ENCODE measurements at regions of chr3 and their contacts with region 1.

Region 1: GRCh38 chr3:194472290-194472920 is 14.4 kb downstream of the ATP13A3 start:
- DNase-seq: peak in 1 of 2 donors; percentile 76
- ATAC-seq: peak; percentile 84 to 96 (median 93)
- H3K4me3 ChIP-seq: no peak overlapping the region
- H3K4me3 Mint-ChIP-seq: no peak overlapping the region
- H3K27ac ChIP-seq: no peak overlapping the region
- H3K27ac Mint-ChIP-seq: no peak overlapping the region
- H3K4me1 ChIP-seq: no peaks in the 10 kb centered on the region
- H3K4me1 Mint-ChIP-seq: peaks cover 6 to 11% of the 10 kb centered on the region in 2 donors
- H3K27me3 ChIP-seq: no peaks in the 10 kb centered on the region
- H3K27me3 Mint-ChIP-seq: no peaks in the 10 kb centered on the region
- CTCF ChIP-seq: peak; percentile 95

Region 2: GRCh38 chr3:194070634-194071409 is 401.6 kb before region 1 on chr3:
- intact Hi-C with region 1: no loop called
- DNase-seq: peak; percentile 66 to 74
- ATAC-seq: peak; percentile 84 to 89 (median 86)
- H3K4me3 ChIP-seq: peak overlapping the region; percentile 25
- H3K4me3 Mint-ChIP-seq: peak overlapping the region; percentile 83
- H3K27ac ChIP-seq: no peak overlapping the region
- H3K27ac Mint-ChIP-seq: peak overlapping the region in 1 of 2 donors; percentile 71
- H3K4me1 ChIP-seq: peaks cover 14% of the 10 kb centered on the region
- H3K4me1 Mint-ChIP-seq: peaks cover 6 to 13% of the 10 kb centered on the region in 2 donors
- H3K27me3 ChIP-seq: peaks cover 14% of the 10 kb centered on the region
- H3K27me3 Mint-ChIP-seq: peaks cover 36 to 53% of the 10 kb centered on the region in 2 donors
- CTCF ChIP-seq: no peak

Region 3: GRCh38 chr3:194486540-194487288 is 14.3 kb after region 1 on chr3 and contains the start of gene ATP13A3:
- intact Hi-C with region 1: loop called (anchors 1 kb)
- DNase-seq: peak; percentile 87 to 96
- ATAC-seq: peak; percentile 77 to 94 (median 82)
- H3K4me3 ChIP-seq: peak within 1 kb of the TSS; percentile 64
- H3K4me3 Mint-ChIP-seq: peak within 1 kb of the TSS; percentile 95
- H3K27ac ChIP-seq: peak within 1 kb of the TSS; percentile 87
- H3K27ac Mint-ChIP-seq: peak within 1 kb of the TSS; percentile 89 to 90
- H3K4me1 ChIP-seq: peaks cover 31% of the 10 kb centered on the region
- H3K4me1 Mint-ChIP-seq: peaks cover 34 to 40% of the 10 kb centered on the region in 2 donors
- H3K27me3 ChIP-seq: no peaks in the 10 kb centered on the region
- H3K27me3 Mint-ChIP-seq: no peaks in the 10 kb centered on the region
- CTCF ChIP-seq: no peak
- total RNA-seq, gene ATP13A3: 62.9 to 79.2 (median 64.2) TPM

Region 4: DNA sequence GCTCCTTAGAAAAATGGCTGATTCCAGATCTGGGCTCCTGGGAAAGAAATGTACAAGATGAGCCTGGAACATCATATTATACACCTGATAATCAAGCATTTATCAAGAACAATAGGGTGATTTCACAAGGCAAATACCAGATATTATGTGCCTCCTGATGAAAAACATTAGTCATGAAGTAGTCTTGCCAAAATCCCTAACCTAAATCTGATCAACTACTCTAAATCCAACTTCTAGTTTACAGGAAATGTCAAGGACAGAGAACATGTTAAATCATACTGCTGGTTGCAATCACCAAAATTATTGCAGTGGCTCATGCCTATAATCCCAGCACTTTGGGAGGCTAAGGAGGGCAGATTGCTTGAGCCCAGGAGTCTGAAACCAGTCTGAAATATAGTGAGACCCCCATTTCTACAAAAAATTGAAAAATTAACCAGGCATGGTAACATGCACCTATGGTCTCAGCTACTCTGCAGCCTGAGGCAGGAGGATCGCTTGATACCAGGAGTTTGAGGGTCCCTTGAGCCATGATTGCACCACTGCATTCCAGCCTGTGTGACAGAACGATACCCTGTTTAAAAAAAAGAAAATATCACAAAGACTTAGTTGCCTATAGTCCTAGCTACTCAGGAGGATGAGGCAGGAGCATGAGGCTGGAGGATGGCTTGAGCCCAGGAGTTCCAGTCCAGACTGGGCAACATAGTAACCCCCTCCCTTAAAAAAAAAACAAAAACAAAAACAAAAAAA is 49.3 kb after region 1 on chr3:
- intact Hi-C with region 1: loop called (anchors 1 kb)
- DNase-seq: no peak
- ATAC-seq: no peak
- H3K4me3 ChIP-seq: no peak overlapping the region
- H3K4me3 Mint-ChIP-seq: no peak overlapping the region
- H3K27ac ChIP-seq: no peak overlapping the region
- H3K27ac Mint-ChIP-seq: no peak overlapping the region
- H3K4me1 ChIP-seq: no peaks in the 10 kb centered on the region
- H3K4me1 Mint-ChIP-seq: no peaks in the 10 kb centered on the region
- H3K27me3 ChIP-seq: no peaks in the 10 kb centered on the region
- H3K27me3 Mint-ChIP-seq: peaks cover 0 to 4% of the 10 kb centered on the region in 2 donors
- CTCF ChIP-seq: no peak

Region 5: GRCh38 chr3:194573691-194574437 is 101.5 kb after region 1 on chr3:
- intact Hi-C with region 1: loop called (anchors 1 kb)
- DNase-seq: peak in 1 of 2 donors; percentile 63
- ATAC-seq: peak; percentile 69 to 93 (median 87)
- H3K4me3 ChIP-seq: no peak overlapping the region
- H3K4me3 Mint-ChIP-seq: no peak overlapping the region
- H3K27ac ChIP-seq: no peak overlapping the region
- H3K27ac Mint-ChIP-seq: no peak overlapping the region
- H3K4me1 ChIP-seq: no peaks in the 10 kb centered on the region
- H3K4me1 Mint-ChIP-seq: no peaks in the 10 kb centered on the region
- H3K27me3 ChIP-seq: no peaks in the 10 kb centered on the region
- H3K27me3 Mint-ChIP-seq: peaks cover 31 to 44% of the 10 kb centered on the region in 2 donors
- CTCF ChIP-seq: peak; percentile 32

Region 6: DNA sequence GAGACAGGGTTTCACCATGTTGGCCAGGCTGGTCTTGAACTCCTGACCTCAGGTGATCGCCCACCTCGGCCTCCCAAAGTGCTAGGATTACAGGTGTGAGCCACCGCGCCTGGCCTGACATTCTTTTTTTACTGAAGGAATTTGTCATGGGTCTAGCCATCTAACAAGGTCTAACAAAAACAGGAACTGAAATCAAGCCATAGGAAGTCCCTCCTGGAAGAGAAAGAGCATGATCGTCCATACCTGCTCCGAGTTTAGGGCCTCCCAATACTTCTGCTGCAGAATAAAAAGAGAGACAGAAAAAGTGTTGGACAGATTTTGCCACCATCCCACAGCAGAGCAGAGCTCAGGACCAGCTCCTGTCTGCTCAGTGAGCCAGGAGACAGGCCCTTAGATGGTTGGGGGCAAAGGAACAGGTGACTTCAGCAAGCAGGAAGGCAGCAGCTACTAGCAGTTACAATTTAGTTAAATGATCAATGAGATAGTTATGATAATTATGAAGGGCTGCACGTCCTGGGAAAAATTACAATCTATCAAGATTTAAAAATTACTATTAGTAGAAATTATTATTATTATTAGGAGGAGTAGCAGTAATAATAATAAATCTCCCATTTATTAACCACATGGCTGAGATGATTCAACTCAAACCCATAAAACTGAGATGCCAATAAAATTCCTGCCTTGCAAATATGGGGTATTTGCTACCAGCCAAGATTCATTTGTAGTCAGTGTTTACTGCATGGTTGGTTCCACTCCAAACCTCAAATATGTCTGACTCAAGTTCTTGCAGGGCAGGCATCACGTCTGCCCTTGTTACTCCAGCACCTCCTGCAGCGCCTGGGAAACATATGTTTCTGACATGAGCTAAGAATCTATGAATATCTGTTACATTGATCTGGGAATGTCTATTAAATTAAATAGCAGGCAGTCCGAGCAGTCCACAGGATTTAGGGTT is 120.7 kb after region 1 on chr3:
- intact Hi-C with region 1: loop called (anchors 1 kb)
- DNase-seq: no peak
- ATAC-seq: no peak
- H3K4me3 ChIP-seq: no peak overlapping the region
- H3K4me3 Mint-ChIP-seq: no peak overlapping the region
- H3K27ac ChIP-seq: no peak overlapping the region
- H3K27ac Mint-ChIP-seq: no peak overlapping the region
- H3K4me1 ChIP-seq: no peaks in the 10 kb centered on the region
- H3K4me1 Mint-ChIP-seq: peaks cover 0 to 6% of the 10 kb centered on the region in 2 donors
- H3K27me3 ChIP-seq: no peaks in the 10 kb centered on the region
- H3K27me3 Mint-ChIP-seq: no peaks in the 10 kb centered on the region
- CTCF ChIP-seq: no peak